HCT116 (cell line): ENCODE measurements at regions of chr1 and their contacts with region 1.

Region 1: GRCh38 chr1:156625436-156626078 is 6.3 kb downstream of the HAPLN2 start:
- DNase-seq: no peak
- ATAC-seq: peak; percentile 80
- H3K4me3 ChIP-seq: peak overlapping the region; percentile 33 to 46
- H3K27ac ChIP-seq: no peak overlapping the region
- H3K4me1 ChIP-seq: peaks cover 3 to 7% of the 10 kb centered on the region in 2 experiments; a peak in 2 of 4 replicates
- H3K27me3 ChIP-seq: no peaks in the 10 kb centered on the region
- CTCF ChIP-seq: peak; percentile 68 to 91 (median 84); a peak in 5 of 6 replicates
- POLR2A ChIP-seq: no peak
- RAD21 ChIP-seq: peak; percentile 73

Region 2: GRCh38 chr1:156641761-156642264 is 16.3 kb after region 1 on chr1 and contains the start of gene BCAN:
- CTCF ChIA-PET with region 1: interaction called, 33 read pairs
- POLR2A ChIA-PET with region 1: no interaction called
- RAD21 ChIA-PET with region 1: no interaction called
- intact Hi-C with region 1: no loop called
- DNase-seq: no peak
- ATAC-seq: no peak
- H3K4me3 ChIP-seq: no peak within 1 kb of the TSS
- H3K27ac ChIP-seq: no peak within 1 kb of the TSS
- H3K4me1 ChIP-seq: peaks cover 8 to 27% of the 10 kb centered on the region in 2 experiments; a peak in 3 of 4 replicates
- H3K27me3 ChIP-seq: no peaks in the 10 kb centered on the region
- CTCF ChIP-seq: no peak
- POLR2A ChIP-seq: no peak
- RAD21 ChIP-seq: no peak
- total RNA-seq, gene BCAN: not detected

Region 3: GRCh38 chr1:156648951-156649350 is 23.4 kb after region 1 on chr1:
- CTCF ChIA-PET with region 1: no interaction called
- POLR2A ChIA-PET with region 1: no interaction called
- RAD21 ChIA-PET with region 1: no interaction called
- intact Hi-C with region 1: loop called (anchors 1 kb)
- DNase-seq: no peak
- ATAC-seq: no peak
- H3K4me3 ChIP-seq: no peak overlapping the region
- H3K27ac ChIP-seq: no peak overlapping the region
- H3K4me1 ChIP-seq: no peaks in the 10 kb centered on the region
- H3K27me3 ChIP-seq: no peaks in the 10 kb centered on the region
- CTCF ChIP-seq: no peak
- POLR2A ChIP-seq: no peak
- RAD21 ChIP-seq: no peak

Region 4: GRCh38 chr1:156659994-156660751 is 34.6 kb after region 1 on chr1:
- CTCF ChIA-PET with region 1: interaction called, 14 read pairs
- POLR2A ChIA-PET with region 1: interaction called, 4 read pairs
- RAD21 ChIA-PET with region 1: interaction called in 1 of 2 experiments, 3 read pairs
- intact Hi-C with region 1: loop called (anchors 1 kb)
- DNase-seq: peak; percentile 94
- ATAC-seq: peak; percentile 74
- H3K4me3 ChIP-seq: peak overlapping the region; percentile 69 to 90
- H3K27ac ChIP-seq: peak overlapping the region; percentile 99
- H3K4me1 ChIP-seq: peaks cover 46 to 77% of the 10 kb centered on the region in 2 experiments
- H3K27me3 ChIP-seq: no peaks in the 10 kb centered on the region
- CTCF ChIP-seq: peak in 2 of 3 experiments; percentile 99; a peak in 4 of 6 replicates
- POLR2A ChIP-seq: peak; percentile 76
- RAD21 ChIP-seq: no peak

Region 5: DNA sequence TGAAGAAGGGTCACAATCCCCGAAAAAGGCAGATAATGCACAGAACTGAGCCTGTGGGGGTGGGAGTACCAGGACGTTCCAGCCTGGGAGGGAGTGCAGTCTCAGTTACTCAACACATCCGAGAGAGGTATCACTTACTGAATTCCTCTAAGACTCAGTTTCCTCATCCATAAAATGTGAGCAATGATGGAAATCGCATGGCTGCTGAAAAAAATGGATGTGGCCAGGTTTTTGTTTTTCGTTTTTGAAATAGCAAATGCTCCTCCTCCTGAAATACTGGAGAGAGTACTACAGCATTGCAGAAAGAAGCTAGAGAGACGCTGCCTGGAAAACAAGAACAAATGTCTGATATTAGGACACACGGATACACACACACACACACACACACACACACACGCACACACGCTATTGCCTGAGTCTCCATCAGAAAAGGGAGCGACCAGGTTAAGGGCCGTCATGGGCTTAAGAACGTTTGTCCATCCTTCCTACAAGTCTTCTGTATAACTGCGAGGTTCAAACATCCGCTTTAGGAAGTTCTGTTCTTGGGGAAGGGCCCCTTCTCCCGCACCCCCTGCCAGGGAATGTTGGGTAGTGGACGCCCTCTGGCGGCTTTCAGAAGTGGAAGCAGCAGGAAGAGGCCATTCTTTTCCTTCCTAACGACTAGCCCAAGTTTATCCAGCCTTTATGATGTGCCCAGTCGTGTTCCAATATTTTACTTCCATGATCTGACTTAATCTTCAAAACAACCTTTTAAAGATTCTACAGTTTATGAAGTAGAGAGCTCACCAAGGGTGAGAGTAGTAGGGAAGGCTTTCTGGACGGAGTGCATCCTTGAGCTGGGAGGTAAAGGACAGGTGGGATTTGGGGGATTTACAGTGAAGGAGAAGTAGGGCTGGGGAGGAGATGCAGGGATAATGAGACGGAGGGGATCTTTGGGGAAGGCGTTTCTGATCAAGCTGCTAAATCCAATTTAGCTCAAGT is 52.3 kb after region 1 on chr1:
- CTCF ChIA-PET with region 1: interaction called, 27 read pairs
- POLR2A ChIA-PET with region 1: interaction called, 4 read pairs
- RAD21 ChIA-PET with region 1: interaction called in 1 of 2 experiments, 3 read pairs
- intact Hi-C with region 1: loop called (anchors 1 kb)
- DNase-seq: no peak
- ATAC-seq: peak; percentile 71
- H3K4me3 ChIP-seq: peak overlapping the region; percentile 39 to 53
- H3K27ac ChIP-seq: peak overlapping the region; percentile 36; the same call in 1 of the 2 replicates
- H3K4me1 ChIP-seq: peaks cover 14 to 32% of the 10 kb centered on the region in 2 experiments
- H3K27me3 ChIP-seq: no peaks in the 10 kb centered on the region
- CTCF ChIP-seq: peak; percentile 88 to 98 (median 95)
- POLR2A ChIP-seq: no peak
- RAD21 ChIP-seq: peak; percentile 99

Region 6: DNA sequence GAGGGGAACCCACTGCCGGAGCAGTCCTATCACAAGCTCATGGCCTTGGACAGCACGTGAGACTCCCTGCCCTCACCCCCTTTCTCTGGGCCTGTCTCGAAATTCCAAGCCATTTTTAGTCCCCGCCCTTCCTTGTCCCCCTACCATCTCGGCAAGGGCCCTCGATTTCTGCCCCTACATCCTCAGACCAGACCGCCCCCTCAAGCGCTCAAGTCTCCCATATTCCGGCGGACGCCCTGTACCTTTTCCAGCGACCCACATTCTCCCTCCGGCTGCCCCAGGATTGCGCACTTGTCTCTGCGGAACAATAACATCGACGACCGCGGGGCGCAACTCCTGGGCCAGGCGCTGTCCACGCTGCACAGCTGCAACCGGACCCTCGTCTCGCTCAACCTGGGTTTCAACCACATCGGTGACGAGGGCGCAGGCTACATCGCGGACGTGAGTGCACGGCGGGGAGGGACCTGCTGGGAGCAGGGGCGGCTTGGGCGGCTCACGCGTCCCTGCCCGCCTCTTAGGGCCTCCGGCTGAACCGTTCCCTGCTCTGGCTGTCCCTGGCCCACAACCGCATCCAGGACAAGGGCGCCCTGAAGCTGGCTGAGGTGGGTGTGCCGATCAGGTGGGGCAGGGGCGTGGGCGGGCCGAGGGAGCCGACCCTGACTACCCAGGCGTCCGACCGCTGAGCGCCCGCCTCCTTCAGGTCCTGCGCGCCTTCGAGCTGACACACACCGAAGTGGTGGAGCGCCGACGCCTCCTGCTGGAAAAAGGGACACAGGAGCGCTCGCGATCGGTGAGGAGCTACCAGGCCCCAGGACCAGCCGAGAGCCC is 301.9 kb after region 1 on chr1:
- CTCF ChIA-PET with region 1: interaction called, 4 read pairs
- POLR2A ChIA-PET with region 1: no interaction called
- RAD21 ChIA-PET with region 1: no interaction called
- intact Hi-C with region 1: loop called (anchors 10 kb)
- DNase-seq: peak; percentile 66
- ATAC-seq: peak; percentile 89
- H3K4me3 ChIP-seq: peak overlapping the region; percentile 38 to 59
- H3K27ac ChIP-seq: peak overlapping the region; percentile 12; the same call in 1 of the 2 replicates
- H3K4me1 ChIP-seq: peaks cover 20 to 31% of the 10 kb centered on the region in 2 experiments
- H3K27me3 ChIP-seq: peaks cover 6% of the 10 kb centered on the region; the same call in 1 of the 2 replicates
- CTCF ChIP-seq: peak; percentile 81 to 93 (median 81)
- POLR2A ChIP-seq: no peak
- RAD21 ChIP-seq: peak; percentile 97